ENCODE measurements at regions of chr5 and their contacts with region 1.

Region 1: GRCh38 chr5:43602461-43603343 is at the start of gene NNT:
- DNase-seq: peak; percentile 83 to 91 (median 88)
- ATAC-seq: peak; percentile 32 to 84 (median 76)
- H3K4me3 ChIP-seq: peak within 1 kb of the TSS; percentile 62 to 90 (median 84)
- H3K27ac ChIP-seq: peak within 1 kb of the TSS; percentile 94 to 98 (median 96)
- H3K4me1 ChIP-seq: peaks cover 0 to 45% (median 18%) of the 10 kb centered on the region in 12 donors
- H3K27me3 ChIP-seq: no peaks in the 10 kb centered on the region
- CTCF ChIP-seq: peak in 1 of 12 donors; percentile 16
- POLR2A ChIP-seq: peak in 1 of 2 donors; percentile 48
- total RNA-seq, gene NNT: 206 to 631 (median 475) TPM

Region 2: DNA sequence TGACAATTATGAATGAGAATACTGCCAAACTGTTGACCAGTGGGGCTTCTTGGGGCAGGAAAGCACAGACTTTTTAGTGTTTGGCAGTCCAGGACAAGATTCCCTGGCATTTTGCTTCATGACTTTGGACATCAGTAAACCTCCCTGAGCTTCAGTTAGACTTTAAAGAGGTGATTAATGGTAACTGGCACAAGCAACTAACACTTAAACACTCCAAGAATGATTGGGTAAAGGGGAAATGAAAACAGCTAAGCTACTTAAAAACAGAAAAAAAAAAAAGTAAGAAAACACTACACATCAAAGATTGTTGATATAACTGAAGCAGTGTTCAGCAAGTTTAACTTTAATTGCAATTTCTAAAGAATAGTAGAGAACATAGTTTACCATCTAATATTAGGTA is 59.3 kb before region 1 on chr5:
- intact Hi-C with region 1: no loop called
- DNase-seq: no peak
- ATAC-seq: no peak
- H3K4me3 ChIP-seq: no peak overlapping the region
- H3K27ac ChIP-seq: no peak overlapping the region
- H3K4me1 ChIP-seq: peaks cover 0 to 7% (median 3%) of the 10 kb centered on the region in 12 donors
- H3K27me3 ChIP-seq: no peaks in the 10 kb centered on the region
- CTCF ChIP-seq: no peak
- POLR2A ChIP-seq: no peak

Region 3: DNA sequence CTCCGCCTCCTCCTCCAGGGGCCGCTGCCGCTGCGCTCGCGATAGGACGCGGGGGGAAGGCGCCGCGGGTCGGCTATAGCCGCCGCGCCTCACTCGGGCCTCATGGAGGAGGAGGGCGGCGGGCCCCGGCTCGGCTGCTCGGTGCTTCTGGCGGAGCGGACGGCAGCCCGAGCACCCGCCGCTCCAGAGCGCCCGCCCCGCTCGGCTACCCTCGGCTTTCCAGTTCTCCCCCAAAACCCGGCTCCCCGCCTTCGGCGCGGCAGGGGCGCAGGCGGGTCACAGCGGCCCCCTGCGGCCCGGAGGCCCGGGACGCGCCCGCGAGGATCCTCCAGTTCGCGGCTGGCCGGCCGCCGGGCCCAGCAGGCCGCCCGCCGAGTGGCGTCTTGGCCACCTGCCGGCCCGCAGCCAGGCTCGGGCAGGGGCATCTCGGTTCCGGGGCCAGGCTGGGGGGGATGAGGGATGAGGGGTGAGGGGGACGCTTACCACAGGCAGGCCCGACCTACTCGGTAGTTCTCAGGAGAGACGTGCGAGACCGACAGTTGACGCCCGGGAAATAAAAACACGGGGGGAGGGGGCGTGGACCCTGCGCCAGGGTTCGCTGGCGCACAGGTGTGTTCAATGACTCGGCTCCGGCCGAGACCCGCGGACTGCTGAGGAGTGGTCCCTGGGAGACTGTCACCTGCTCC is 45.7 kb before region 1 on chr5 and contains the start of gene PAIP1:
- intact Hi-C with region 1: loop called (anchors 1 to 5 kb)
- DNase-seq: peak; percentile 76 to 92 (median 84)
- ATAC-seq: peak; percentile 8 to 93 (median 86)
- H3K4me3 ChIP-seq: peak within 1 kb of the TSS; percentile 66 to 95 (median 85)
- H3K27ac ChIP-seq: peak within 1 kb of the TSS; percentile 89 to 99 (median 98)
- H3K4me1 ChIP-seq: peaks cover 3 to 47% (median 33%) of the 10 kb centered on the region in 12 donors
- H3K27me3 ChIP-seq: peaks cover 0 to 4% (median 0%) of the 10 kb centered on the region in 9 donors
- CTCF ChIP-seq: peak; percentile 50 to 92 (median 76)
- POLR2A ChIP-seq: peak in 1 of 2 donors; percentile 44
- total RNA-seq, gene PAIP1: 99.8 to 173 (median 140) TPM

Region 4: GRCh38 chr5:43573058-43573457 is 29.6 kb before region 1 on chr5:
- intact Hi-C with region 1: loop called in 1 of 10 experiments (anchors 2 kb)
- DNase-seq: no peak
- ATAC-seq: peak in 1 of 4 donors; percentile 5
- H3K4me3 ChIP-seq: no peak overlapping the region
- H3K27ac ChIP-seq: peak overlapping the region in 11 of 12 donors; percentile 60 to 83 (median 71)
- H3K4me1 ChIP-seq: peaks cover 0 to 38% (median 18%) of the 10 kb centered on the region in 12 donors
- H3K27me3 ChIP-seq: no peaks in the 10 kb centered on the region
- CTCF ChIP-seq: no peak
- POLR2A ChIP-seq: no peak

Region 5: GRCh38 chr5:43631182-43631910 is 28.6 kb after region 1 on chr5:
- intact Hi-C with region 1: loop called in 1 of 10 experiments (anchors 2 kb)
- DNase-seq: peak in 3 of 5 donors; percentile 38 to 42 (median 39)
- ATAC-seq: peak; percentile 55 to 83 (median 78)
- H3K4me3 ChIP-seq: no peak overlapping the region
- H3K27ac ChIP-seq: peak overlapping the region in 7 of 12 donors; percentile 2 to 66 (median 39)
- H3K4me1 ChIP-seq: peaks cover 0 to 70% (median 26%) of the 10 kb centered on the region in 12 donors
- H3K27me3 ChIP-seq: no peaks in the 10 kb centered on the region
- CTCF ChIP-seq: peak; percentile 53 to 75 (median 66)
- POLR2A ChIP-seq: no peak

Region 6: GRCh38 chr5:43941806-43942205 is 339.1 kb after region 1 on chr5:
- intact Hi-C with region 1: no loop called
- DNase-seq: no peak
- ATAC-seq: no peak
- H3K4me3 ChIP-seq: no peak overlapping the region
- H3K27ac ChIP-seq: no peak overlapping the region
- H3K4me1 ChIP-seq: no peaks in the 10 kb centered on the region
- H3K27me3 ChIP-seq: no peaks in the 10 kb centered on the region
- CTCF ChIP-seq: no peak
- POLR2A ChIP-seq: no peak